HepG2 (cell line): ENCODE measurements at regions of chr4 and their contacts with region 1.

Region 1: GRCh38 chr4:128287871-128288688 is 467 bp upstream of the PGRMC2 start:
- DNase-seq: peak; percentile 96
- ATAC-seq: peak; percentile 85
- H3K4me3 ChIP-seq: peak overlapping the region; percentile 94 to 98 (median 95)
- H3K27ac ChIP-seq: peak overlapping the region; percentile 77
- H3K4me1 ChIP-seq: peaks cover 34% of the 10 kb centered on the region
- H3K27me3 ChIP-seq: peaks cover 2 to 5% of the 10 kb centered on the region in 2 experiments; a peak in 3 of 5 replicates
- CTCF ChIP-seq: peak; percentile 51
- EP300 ChIP-seq: peak in 1 of 2 experiments; percentile 37; a peak in 1 of 4 replicates
- POLR2A ChIP-seq: peak; percentile 53 to 88; a peak in 2 of 4 replicates
- RAD21 ChIP-seq: peak; percentile 66

Region 2: DNA sequence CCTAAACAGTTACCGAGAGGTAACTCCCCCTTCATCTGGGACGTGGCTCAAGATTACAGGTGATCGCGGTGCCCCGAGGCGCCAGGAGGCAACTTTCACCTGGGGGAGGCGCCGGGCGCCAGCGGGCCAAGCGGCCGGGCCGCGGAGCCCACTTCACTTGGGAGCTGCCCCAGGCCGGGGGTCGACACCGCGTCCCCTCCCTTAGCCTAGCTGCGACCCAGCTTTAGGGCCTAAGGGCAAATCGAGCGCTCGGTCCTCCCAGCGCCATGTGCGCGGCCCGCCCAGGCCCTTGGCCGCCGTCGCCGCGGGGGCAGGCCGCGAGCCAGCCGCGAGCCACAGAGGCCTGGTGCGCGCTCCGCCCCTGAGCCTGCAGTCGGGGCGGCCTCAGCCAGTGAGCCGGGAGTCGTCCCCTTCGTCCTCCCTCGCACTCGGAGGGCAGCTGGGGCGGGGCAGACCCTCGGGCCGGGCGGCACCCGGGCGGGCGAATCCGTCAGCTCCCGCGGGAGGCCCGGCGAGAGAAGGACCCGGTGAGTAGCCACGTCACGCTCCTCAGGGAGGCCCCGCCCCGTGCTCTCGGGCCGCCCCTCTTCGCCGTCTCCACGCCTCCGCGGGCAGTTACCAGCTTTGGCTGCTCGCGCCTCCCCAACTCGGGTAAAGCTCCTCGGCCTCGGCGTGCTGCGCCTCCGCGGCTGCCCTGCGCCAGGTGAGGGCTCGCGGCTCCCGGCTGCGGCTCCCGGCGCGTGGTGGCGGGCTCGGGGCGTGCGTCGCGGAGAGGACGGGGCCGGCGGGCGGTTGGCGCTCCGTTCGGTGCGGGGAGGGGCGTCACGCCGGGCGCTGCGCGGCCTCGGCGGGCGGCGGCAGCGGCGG is 227.1 kb before region 1 on chr4 and contains the start of gene LARP1B:
- CTCF ChIA-PET with region 1: no interaction called
- POLR2A ChIA-PET with region 1: interaction called, 7 read pairs
- in situ Hi-C with region 1: no loop called
- intact Hi-C with region 1: loop called (anchors 5 kb)
- DNase-seq: peak; percentile 91
- ATAC-seq: peak; percentile 92
- H3K4me3 ChIP-seq: peak within 1 kb of the TSS; percentile 71 to 94 (median 91)
- H3K27ac ChIP-seq: peak within 1 kb of the TSS; percentile 99
- H3K4me1 ChIP-seq: peaks cover 40% of the 10 kb centered on the region
- H3K27me3 ChIP-seq: no peaks in the 10 kb centered on the region
- CTCF ChIP-seq: peak; percentile 16; the same call in 1 of the 2 replicates
- EP300 ChIP-seq: no peak
- POLR2A ChIP-seq: peak; percentile 92 to 94
- RAD21 ChIP-seq: peak; percentile 77; the same call in 1 of the 2 replicates
- total RNA-seq, gene LARP1B: 52.7 and 57.1 TPM in 2 replicates

Region 3: GRCh38 chr4:128191115-128191781 is 96.8 kb before region 1 on chr4:
- CTCF ChIA-PET with region 1: no interaction called
- POLR2A ChIA-PET with region 1: no interaction called
- in situ Hi-C with region 1: no loop called
- intact Hi-C with region 1: loop called (anchors 10 kb)
- DNase-seq: peak; percentile 63
- ATAC-seq: peak; percentile 96
- H3K4me3 ChIP-seq: no peak overlapping the region
- H3K27ac ChIP-seq: no peak overlapping the region
- H3K4me1 ChIP-seq: no peaks in the 10 kb centered on the region
- H3K27me3 ChIP-seq: no peaks in the 10 kb centered on the region
- CTCF ChIP-seq: peak; percentile 91
- EP300 ChIP-seq: no peak
- POLR2A ChIP-seq: no peak
- RAD21 ChIP-seq: peak; percentile 60

Region 4: GRCh38 chr4:128220286-128221235 is 67.5 kb before region 1 on chr4:
- CTCF ChIA-PET with region 1: no interaction called
- POLR2A ChIA-PET with region 1: no interaction called
- in situ Hi-C with region 1: no loop called
- intact Hi-C with region 1: loop called (anchors 2 kb)
- DNase-seq: peak; percentile 11
- ATAC-seq: peak; percentile 66
- H3K4me3 ChIP-seq: no peak overlapping the region
- H3K27ac ChIP-seq: no peak overlapping the region
- H3K4me1 ChIP-seq: no peaks in the 10 kb centered on the region
- H3K27me3 ChIP-seq: no peaks in the 10 kb centered on the region
- CTCF ChIP-seq: 0 out of 2 replicates have a peak, but pooled peaks have one; percentile 14
- EP300 ChIP-seq: no peak
- POLR2A ChIP-seq: no peak
- RAD21 ChIP-seq: no peak

Region 5: GRCh38 chr4:128232719-128233118 is 55.4 kb before region 1 on chr4:
- CTCF ChIA-PET with region 1: no interaction called
- POLR2A ChIA-PET with region 1: no interaction called
- in situ Hi-C with region 1: no loop called
- intact Hi-C with region 1: no loop called
- DNase-seq: no peak
- ATAC-seq: no peak
- H3K4me3 ChIP-seq: no peak overlapping the region
- H3K27ac ChIP-seq: no peak overlapping the region
- H3K4me1 ChIP-seq: no peaks in the 10 kb centered on the region
- H3K27me3 ChIP-seq: no peaks in the 10 kb centered on the region
- CTCF ChIP-seq: no peak
- EP300 ChIP-seq: no peak
- POLR2A ChIP-seq: no peak
- RAD21 ChIP-seq: no peak

Region 6: GRCh38 chr4:128267745-128268144 is 20.3 kb before region 1 on chr4:
- CTCF ChIA-PET with region 1: no interaction called
- POLR2A ChIA-PET with region 1: interaction called, 4 read pairs
- in situ Hi-C with region 1: no loop called
- intact Hi-C with region 1: loop called (anchors 2 kb)
- DNase-seq: no peak
- ATAC-seq: peak; percentile 62
- H3K4me3 ChIP-seq: no peak overlapping the region
- H3K27ac ChIP-seq: no peak overlapping the region
- H3K4me1 ChIP-seq: peaks cover 34% of the 10 kb centered on the region
- H3K27me3 ChIP-seq: no peaks in the 10 kb centered on the region
- CTCF ChIP-seq: no peak
- EP300 ChIP-seq: no peak
- POLR2A ChIP-seq: no peak
- RAD21 ChIP-seq: no peak